CD4-positive, alpha-beta T cell (primary cell): ENCODE measurements at regions of chr14 and their contacts with region 1.

Region 1: DNA sequence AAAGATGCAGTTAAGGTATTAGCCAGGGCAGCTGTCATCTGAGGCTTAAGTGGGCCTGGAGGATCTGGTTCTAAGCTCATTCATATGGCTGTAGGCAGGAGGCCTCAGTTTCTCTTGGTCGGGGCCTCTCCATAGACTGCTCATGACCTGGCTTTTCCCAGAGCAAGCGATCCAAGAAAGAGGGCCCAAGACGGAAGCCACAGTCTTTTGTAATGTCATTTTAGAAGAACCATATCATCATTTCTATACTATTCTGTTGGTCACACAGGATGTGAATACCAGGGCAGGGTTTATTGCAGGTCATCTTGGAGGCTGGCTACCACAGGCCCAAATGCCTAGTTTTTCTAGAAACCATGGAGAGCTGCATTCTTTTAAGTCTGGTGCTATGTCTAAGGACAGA is 47.7 kb downstream of the GNG2 start:
- DNase-seq: no peak
- ATAC-seq: no peak
- H3K4me3 ChIP-seq: no peak overlapping the region
- H3K4me3 Mint-ChIP-seq: no peak overlapping the region
- H3K27ac ChIP-seq: no peak overlapping the region
- H3K27ac Mint-ChIP-seq: peak overlapping the region; percentile 20
- H3K4me1 ChIP-seq: peaks cover 45% of the 10 kb centered on the region
- H3K4me1 Mint-ChIP-seq: peaks cover 76% of the 10 kb centered on the region
- H3K27me3 ChIP-seq: no peaks in the 10 kb centered on the region
- H3K27me3 Mint-ChIP-seq: no peaks in the 10 kb centered on the region
- CTCF ChIP-seq: no peak

Region 2: GRCh38 chr14:51855234-51855633 is 52.9 kb before region 1 on chr14:
- CTCF ChIA-PET with region 1: interaction called, 3 read pairs
- POLR2A ChIA-PET with region 1: interaction called, 5 read pairs
- intact Hi-C with region 1: loop called (anchors 5 to 10 kb)
- DNase-seq: no peak
- ATAC-seq: no peak
- H3K4me3 ChIP-seq: no peak overlapping the region
- H3K4me3 Mint-ChIP-seq: no peak overlapping the region
- H3K27ac ChIP-seq: no peak overlapping the region
- H3K27ac Mint-ChIP-seq: no peak overlapping the region
- H3K4me1 ChIP-seq: peaks cover 21% of the 10 kb centered on the region
- H3K4me1 Mint-ChIP-seq: peaks cover 66% of the 10 kb centered on the region
- H3K27me3 ChIP-seq: no peaks in the 10 kb centered on the region
- H3K27me3 Mint-ChIP-seq: no peaks in the 10 kb centered on the region
- CTCF ChIP-seq: no peak

Region 3: DNA sequence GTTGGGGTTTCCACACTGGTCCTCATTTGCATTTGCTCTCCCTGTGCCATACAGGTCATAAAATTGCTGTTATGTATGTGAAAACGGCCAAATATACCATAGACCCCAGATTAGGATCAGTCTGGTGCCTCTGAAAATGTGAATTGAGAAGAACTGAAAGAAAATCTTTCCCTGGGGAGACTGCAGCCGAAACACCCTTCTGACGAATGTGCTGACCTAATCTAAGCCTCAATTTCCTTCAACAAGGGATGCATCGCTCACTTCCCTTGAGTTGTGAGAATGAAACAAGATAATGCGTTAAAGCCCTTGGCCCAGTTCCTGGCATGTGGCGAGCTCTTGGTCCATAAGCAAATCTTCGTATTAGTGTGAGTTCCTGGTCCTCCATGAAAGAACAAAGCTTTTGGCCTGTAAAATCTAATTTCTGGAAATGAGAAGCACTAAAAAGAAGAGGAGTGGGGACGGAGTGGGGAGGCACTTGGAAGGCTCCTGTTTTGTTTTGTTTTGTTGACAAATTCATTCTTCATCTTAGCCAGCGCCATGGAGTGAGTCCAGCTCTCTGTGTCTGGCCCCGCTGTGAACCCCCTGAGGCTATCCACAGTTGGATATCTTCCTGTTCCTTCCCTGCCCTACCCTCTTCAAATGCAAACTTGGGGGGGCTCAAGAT is 31.8 kb after region 1 on chr14:
- CTCF ChIA-PET with region 1: no interaction called
- POLR2A ChIA-PET with region 1: no interaction called
- intact Hi-C with region 1: no loop called
- DNase-seq: no peak
- ATAC-seq: no peak
- H3K4me3 ChIP-seq: no peak overlapping the region
- H3K4me3 Mint-ChIP-seq: no peak overlapping the region
- H3K27ac ChIP-seq: no peak overlapping the region
- H3K27ac Mint-ChIP-seq: peak overlapping the region; percentile 50
- H3K4me1 ChIP-seq: no peaks in the 10 kb centered on the region
- H3K4me1 Mint-ChIP-seq: peaks cover 62% of the 10 kb centered on the region
- H3K27me3 ChIP-seq: no peaks in the 10 kb centered on the region
- H3K27me3 Mint-ChIP-seq: no peaks in the 10 kb centered on the region
- CTCF ChIP-seq: no peak